Astrocyte of the cerebellum (primary cell): ENCODE measurements at regions of chrX and their contacts with region 1.

Region 1: DNA sequence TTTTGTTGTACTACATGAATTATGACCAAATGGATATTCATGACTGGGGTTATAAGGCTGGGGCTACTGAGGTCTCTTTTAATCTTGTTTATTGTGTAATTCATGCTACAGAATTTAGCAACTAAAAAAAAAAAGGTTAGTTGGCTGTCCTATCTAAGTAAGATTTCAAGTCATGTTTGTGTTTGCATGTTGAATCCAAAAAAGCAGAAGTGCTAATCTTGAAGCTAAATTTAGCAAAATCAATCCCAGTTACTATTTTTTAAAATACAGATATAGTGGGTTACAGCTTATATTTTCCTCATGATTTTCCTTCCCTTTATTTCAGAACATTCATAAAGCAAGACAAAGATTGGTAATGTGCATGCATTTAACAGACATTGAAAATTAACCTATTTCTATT is 19.4 kb downstream of the MTMR1 start:
- DNase-seq: no peak
- H3K4me3 ChIP-seq: no peak overlapping the region
- CTCF ChIP-seq: no peak

Region 2: GRCh38 chrX:150649096-150649870 is 63.3 kb before region 1 on chrX:
- in situ Hi-C with region 1: loop called (anchors 5 kb)
- DNase-seq: no peak
- H3K4me3 ChIP-seq: no peak overlapping the region
- CTCF ChIP-seq: no peak

Region 3: DNA sequence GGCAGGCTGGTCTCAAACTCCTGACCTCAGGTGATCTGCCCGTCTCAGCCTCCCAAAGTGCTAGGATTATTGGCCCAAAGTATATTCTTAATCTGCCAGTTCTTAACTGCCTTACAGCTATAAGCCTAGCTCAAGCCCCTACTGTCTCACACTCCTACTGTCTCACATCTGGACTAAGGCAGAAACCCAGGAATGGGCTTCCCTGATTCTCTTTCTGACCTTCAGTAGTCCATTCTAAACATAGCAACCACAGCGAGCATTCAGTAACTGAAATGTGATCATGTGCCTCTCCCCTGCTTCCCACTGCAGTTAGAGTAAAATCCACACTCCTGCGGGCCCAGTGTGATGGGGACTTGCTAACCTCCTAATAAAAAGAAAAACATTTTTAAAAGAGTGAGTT is 39.5 kb after region 1 on chrX:
- in situ Hi-C with region 1: no loop called
- DNase-seq: no peak
- H3K4me3 ChIP-seq: no peak overlapping the region
- CTCF ChIP-seq: no peak